ENCODE measurements at regions of chr17 and their contacts with region 1.

Region 1: DNA sequence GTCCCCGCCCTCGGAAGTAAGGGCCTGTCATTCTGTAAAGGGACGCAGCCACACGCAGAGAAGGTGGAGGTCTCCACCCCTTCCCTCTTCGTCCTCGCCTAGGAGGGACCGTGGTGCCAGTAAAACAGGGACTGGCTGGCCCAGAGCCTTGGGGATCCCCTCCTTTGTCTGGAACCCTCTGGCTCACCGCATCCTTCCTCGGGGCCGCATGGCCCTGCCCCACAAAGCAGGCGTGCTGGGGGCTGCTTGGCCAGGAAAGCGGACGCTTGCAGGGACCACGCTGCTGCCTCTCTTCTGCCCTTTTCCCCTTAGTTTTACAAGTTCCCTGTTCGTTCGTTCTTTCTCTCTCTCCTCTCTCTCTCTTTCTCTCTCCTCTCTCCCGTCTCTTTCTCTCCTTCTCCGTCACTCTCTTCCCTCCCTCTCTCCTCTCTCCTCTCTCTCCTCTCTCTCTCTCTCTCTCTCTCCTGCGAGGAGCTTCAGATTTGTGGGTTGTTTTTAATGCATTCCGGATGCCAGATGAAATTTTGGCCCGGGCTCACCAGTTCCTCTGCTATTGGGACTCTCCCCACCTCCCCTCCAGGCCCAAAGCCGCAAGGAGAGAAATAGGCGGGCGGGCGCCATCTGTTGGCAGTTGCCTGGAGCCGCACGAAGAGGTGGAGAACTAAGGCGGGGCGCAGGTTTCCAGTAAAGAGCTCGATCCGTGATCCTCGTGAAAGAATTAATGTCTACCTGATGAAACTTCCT is 35.1 kb upstream of the CDRT4 start:
- DNase-seq: peak; percentile 67
- H3K4me3 ChIP-seq: peak overlapping the region; percentile 33
- CTCF ChIP-seq: peak; percentile 88

Region 2: GRCh38 chr17:15233022-15233805 is 269.3 kb before region 1 on chr17:
- CTCF ChIA-PET with region 1: interaction called, 45 read pairs
- POLR2A ChIA-PET with region 1: interaction called, 3 read pairs
- DNase-seq: peak; percentile 31
- H3K4me3 ChIP-seq: no peak overlapping the region
- CTCF ChIP-seq: peak; percentile 54

Region 3: GRCh38 chr17:15247891-15248529 is 254.5 kb before region 1 on chr17:
- CTCF ChIA-PET with region 1: interaction called, 27 read pairs
- POLR2A ChIA-PET with region 1: interaction called, 4 read pairs
- DNase-seq: no peak
- H3K4me3 ChIP-seq: no peak overlapping the region
- CTCF ChIP-seq: peak; percentile 17

Region 4: GRCh38 chr17:15273141-15273793 is 229.3 kb before region 1 on chr17:
- CTCF ChIA-PET with region 1: interaction called, 11 read pairs
- POLR2A ChIA-PET with region 1: no interaction called
- DNase-seq: peak; percentile 93
- H3K4me3 ChIP-seq: no peak overlapping the region
- CTCF ChIP-seq: no peak

Region 5: GRCh38 chr17:15456972-15457722 is 45.4 kb before region 1 on chr17:
- CTCF ChIA-PET with region 1: interaction called, 22 read pairs
- POLR2A ChIA-PET with region 1: interaction called, 4 read pairs
- DNase-seq: peak; percentile 52
- H3K4me3 ChIP-seq: peak overlapping the region; percentile 31
- CTCF ChIP-seq: peak; percentile 54

Region 6: GRCh38 chr17:15479703-15480102 is 22.8 kb before region 1 on chr17:
- CTCF ChIA-PET with region 1: interaction called, 19 read pairs
- POLR2A ChIA-PET with region 1: no interaction called
- DNase-seq: no peak
- H3K4me3 ChIP-seq: no peak overlapping the region
- CTCF ChIP-seq: no peak

Region 7: GRCh38 chr17:15516150-15516549 is 13.6 kb after region 1 on chr17:
- CTCF ChIA-PET with region 1: interaction called, 38 read pairs
- POLR2A ChIA-PET with region 1: interaction called, 3 read pairs
- DNase-seq: no peak
- H3K4me3 ChIP-seq: no peak overlapping the region
- CTCF ChIP-seq: no peak